Tibial artery (tissue), 4 donors: ENCODE measurements at regions of chr11 and their contacts with region 1.

Region 1: DNA sequence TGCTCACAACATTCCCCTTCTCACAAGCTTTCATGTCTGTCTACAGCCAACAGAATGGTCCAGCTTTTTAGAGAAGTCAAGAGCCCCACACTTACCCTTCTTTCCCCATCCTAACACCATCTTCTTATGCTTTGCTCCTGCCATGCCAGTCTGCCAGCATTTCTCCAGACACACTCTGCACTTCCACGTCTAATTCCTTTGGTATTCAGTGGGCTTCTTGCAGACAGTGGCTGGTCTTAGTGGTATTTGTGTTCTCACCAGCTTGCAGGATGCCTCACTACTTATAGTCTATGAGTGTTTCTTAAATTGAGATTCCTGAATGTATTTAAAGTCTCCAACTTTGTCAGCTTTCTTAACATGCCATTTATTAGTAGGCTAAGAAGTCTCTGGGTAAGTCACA is 154.4 kb downstream of the BBOX1 start:
- DNase-seq: no peak
- H3K4me3 ChIP-seq: no peak overlapping the region
- H3K27ac ChIP-seq: no peak overlapping the region
- H3K4me1 ChIP-seq: no peaks in the 10 kb centered on the region
- H3K27me3 ChIP-seq: no peaks in the 10 kb centered on the region
- CTCF ChIP-seq: no peak

Region 2: DNA sequence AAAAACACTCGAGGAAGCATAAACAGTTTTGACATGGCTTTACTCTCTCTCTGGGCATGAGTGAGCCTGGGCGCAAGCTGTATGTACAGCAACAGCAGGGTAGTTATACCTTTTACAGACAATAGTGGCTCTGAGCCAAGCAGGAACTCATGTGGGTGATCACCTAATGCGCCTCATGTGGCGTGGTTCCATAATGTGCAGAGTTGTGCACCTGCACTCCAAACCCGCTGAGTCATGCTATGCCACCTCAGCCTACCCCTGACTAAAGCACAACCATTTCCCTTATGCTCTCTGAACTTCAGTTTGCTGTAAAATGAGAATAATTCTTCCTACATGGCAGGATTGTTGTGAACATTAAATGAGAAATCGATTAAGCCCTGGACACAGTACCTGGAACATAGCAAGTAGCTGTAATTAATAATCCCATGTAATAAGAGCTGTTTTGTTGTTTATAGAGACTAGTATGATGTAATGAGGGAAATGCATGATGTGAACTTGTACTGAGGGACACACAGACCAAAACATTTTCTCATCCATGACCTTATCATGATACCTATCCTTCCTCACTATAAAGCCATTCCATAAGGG is 96.4 kb after region 1 on chr11:
- intact Hi-C with region 1: loop called (anchors 5 kb)
- DNase-seq: no peak
- H3K4me3 ChIP-seq: no peak overlapping the region
- H3K27ac ChIP-seq: no peak overlapping the region
- H3K4me1 ChIP-seq: no peaks in the 10 kb centered on the region
- H3K27me3 ChIP-seq: no peaks in the 10 kb centered on the region
- CTCF ChIP-seq: no peak